ENCODE measurements at regions of chr15 and their contacts with region 1.

Region 1: GRCh38 chr15:70679919-70680231 is 83.5 kb downstream of the UACA start:
- DNase-seq: no peak
- H3K4me3 ChIP-seq: no peak overlapping the region
- H3K4me3 Mint-ChIP-seq: no peak overlapping the region
- H3K27ac Mint-ChIP-seq: no peak overlapping the region
- H3K4me1 ChIP-seq: no peaks in the 10 kb centered on the region
- H3K4me1 Mint-ChIP-seq: peaks cover 24% of the 10 kb centered on the region
- H3K27me3 ChIP-seq: no peaks in the 10 kb centered on the region
- H3K27me3 Mint-ChIP-seq: no peaks in the 10 kb centered on the region
- CTCF ChIP-seq: peak in 1 of 2 experiments; percentile 6

Region 2: GRCh38 chr15:70806992-70807712 is 127.3 kb after region 1 on chr15:
- CTCF ChIA-PET with region 1: interaction called, 3 read pairs
- POLR2A ChIA-PET with region 1: no interaction called
- intact Hi-C with region 1: loop called (anchors 5 kb)
- DNase-seq: no peak
- H3K4me3 ChIP-seq: no peak overlapping the region
- H3K4me3 Mint-ChIP-seq: no peak overlapping the region
- H3K27ac Mint-ChIP-seq: no peak overlapping the region
- H3K4me1 ChIP-seq: no peaks in the 10 kb centered on the region
- H3K4me1 Mint-ChIP-seq: peaks cover 5% of the 10 kb centered on the region
- H3K27me3 ChIP-seq: no peaks in the 10 kb centered on the region
- H3K27me3 Mint-ChIP-seq: no peaks in the 10 kb centered on the region
- CTCF ChIP-seq: no peak